Gastrocnemius medialis (tissue), 4 donors: ENCODE measurements at regions of chr2 and their contacts with region 1.

Region 1: GRCh38 chr2:232761301-232761907 is 15.0 kb downstream of the KCNJ13 start:
- DNase-seq: no peak
- ATAC-seq: peak in 1 of 2 donors; percentile 55
- H3K4me3 ChIP-seq: no peak overlapping the region
- H3K27ac ChIP-seq: no peak overlapping the region
- H3K4me1 ChIP-seq: no peaks in the 10 kb centered on the region
- H3K27me3 ChIP-seq: no peaks in the 10 kb centered on the region
- CTCF ChIP-seq: peak in 2 of 5 experiments; percentile 14 to 36
- POLR2A ChIP-seq: no peak

Region 2: DNA sequence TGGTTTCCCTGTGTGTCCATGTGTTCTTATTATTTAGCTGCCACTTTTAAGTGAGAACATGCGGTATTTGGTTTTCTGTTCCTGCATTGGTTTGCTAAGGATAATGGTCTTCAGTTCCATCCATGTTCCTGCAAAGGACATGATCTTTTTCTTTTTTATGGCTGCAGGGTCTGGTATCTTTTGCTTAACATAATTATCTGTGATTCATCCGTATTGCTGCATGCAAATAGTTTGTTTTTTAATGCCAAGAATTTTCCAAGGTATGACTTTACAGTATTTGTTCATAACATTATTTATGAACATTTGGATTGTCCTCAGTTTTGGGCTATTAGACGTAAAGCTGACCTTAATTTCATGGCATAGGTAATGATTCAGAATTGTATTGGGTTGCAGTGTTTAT is 46.4 kb before region 1 on chr2:
- in situ Hi-C with region 1: no loop called
- intact Hi-C with region 1: no loop called
- DNase-seq: no peak
- ATAC-seq: no peak
- H3K4me3 ChIP-seq: no peak overlapping the region
- H3K27ac ChIP-seq: no peak overlapping the region
- H3K4me1 ChIP-seq: peaks cover 8 to 14% of the 10 kb centered on the region in 2 donors
- H3K27me3 ChIP-seq: no peaks in the 10 kb centered on the region
- CTCF ChIP-seq: no peak
- POLR2A ChIP-seq: no peak

Region 3: DNA sequence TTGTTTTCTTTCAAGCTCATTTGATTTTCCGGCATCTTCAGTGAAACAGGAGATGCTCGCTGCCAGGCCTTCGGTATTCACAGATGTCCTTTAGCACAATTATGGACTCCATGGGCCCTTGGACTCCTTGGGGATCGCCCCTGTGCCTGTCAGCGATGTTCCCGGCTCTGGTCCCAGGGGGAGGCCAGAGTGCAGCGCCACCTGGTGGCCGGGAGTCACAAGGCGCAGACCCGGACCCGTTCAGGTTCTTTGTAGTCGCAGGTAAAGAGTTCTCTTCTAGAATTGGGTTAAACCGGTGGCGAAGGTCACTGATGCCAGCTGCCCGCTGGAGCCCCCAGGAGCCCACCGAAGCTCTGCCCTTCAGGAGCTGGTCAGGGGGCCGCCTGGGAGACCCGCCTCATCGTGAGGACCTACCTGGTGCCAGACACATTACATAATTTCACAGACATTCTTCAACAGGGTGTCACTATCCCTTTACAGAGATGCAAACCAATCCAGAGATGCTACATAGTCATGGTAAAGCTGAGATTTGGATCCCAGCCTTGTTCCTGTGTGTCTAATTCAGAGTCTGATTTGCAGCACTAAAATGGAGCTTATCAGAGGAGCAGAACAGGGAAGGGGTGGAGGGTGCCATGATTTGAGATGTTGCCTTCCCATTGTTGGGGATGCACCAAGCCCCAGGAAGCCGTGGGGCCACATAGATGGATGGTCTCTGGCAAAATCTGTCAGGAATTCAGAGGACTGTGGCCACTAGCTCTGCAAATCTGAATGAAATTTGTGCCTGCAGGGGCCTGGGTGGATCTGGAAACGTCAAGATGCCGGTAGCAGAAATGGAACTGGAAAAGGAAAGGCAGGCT is 292.8 kb after region 1 on chr2:
- in situ Hi-C with region 1: no loop called
- intact Hi-C with region 1: loop called (anchors 10 kb)
- DNase-seq: peak in 1 of 2 donors; percentile 29
- ATAC-seq: no peak
- H3K4me3 ChIP-seq: no peak overlapping the region
- H3K27ac ChIP-seq: no peak overlapping the region
- H3K4me1 ChIP-seq: peaks cover 0 to 9% of the 10 kb centered on the region in 2 donors
- H3K27me3 ChIP-seq: no peaks in the 10 kb centered on the region
- CTCF ChIP-seq: peak; percentile 61 to 93 (median 86)
- POLR2A ChIP-seq: no peak